ENCODE measurements at regions of chr5 and their contacts with region 1.

Region 1: GRCh38 chr5:139251281-139251687 is 42.3 kb upstream of the MATR3 start:
- DNase-seq: peak; percentile 29
- H3K4me3 ChIP-seq: no peak overlapping the region
- H3K27ac ChIP-seq: no peak overlapping the region
- H3K4me1 ChIP-seq: no peaks in the 10 kb centered on the region
- H3K27me3 ChIP-seq: no peaks in the 10 kb centered on the region
- CTCF ChIP-seq: peak in 2 of 5 experiments; percentile 7 to 11
- EP300 ChIP-seq: no peak
- POLR2A ChIP-seq: no peak

Region 2: GRCh38 chr5:138583984-138584637 is 667.2 kb before region 1 on chr5:
- in situ Hi-C with region 1: loop called in 1 of 4 experiments (anchors 25 kb)
- intact Hi-C with region 1: loop called (anchors 10 kb)
- DNase-seq: no peak
- H3K4me3 ChIP-seq: no peak overlapping the region
- H3K27ac ChIP-seq: no peak overlapping the region
- H3K4me1 ChIP-seq: peaks cover 0 to 15% (median 6%) of the 10 kb centered on the region in 4 donors
- H3K27me3 ChIP-seq: no peaks in the 10 kb centered on the region
- CTCF ChIP-seq: no peak
- EP300 ChIP-seq: no peak
- POLR2A ChIP-seq: no peak

Region 3: GRCh38 chr5:138824924-138825863 is 426.1 kb before region 1 on chr5:
- in situ Hi-C with region 1: loop called in 1 of 4 experiments (anchors 10 kb)
- intact Hi-C with region 1: no loop called
- DNase-seq: no peak
- H3K4me3 ChIP-seq: no peak overlapping the region
- H3K27ac ChIP-seq: no peak overlapping the region
- H3K4me1 ChIP-seq: peaks cover 0 to 6% (median 0%) of the 10 kb centered on the region in 4 donors
- H3K27me3 ChIP-seq: no peaks in the 10 kb centered on the region
- CTCF ChIP-seq: peak; percentile 28 to 57 (median 54)
- EP300 ChIP-seq: no peak
- POLR2A ChIP-seq: no peak

Measured in transverse colon (tissue), 4 donors.